Right cardiac atrium (tissue), 5 donors: ENCODE measurements at regions of chr2 and their contacts with region 1.

Region 1: DNA sequence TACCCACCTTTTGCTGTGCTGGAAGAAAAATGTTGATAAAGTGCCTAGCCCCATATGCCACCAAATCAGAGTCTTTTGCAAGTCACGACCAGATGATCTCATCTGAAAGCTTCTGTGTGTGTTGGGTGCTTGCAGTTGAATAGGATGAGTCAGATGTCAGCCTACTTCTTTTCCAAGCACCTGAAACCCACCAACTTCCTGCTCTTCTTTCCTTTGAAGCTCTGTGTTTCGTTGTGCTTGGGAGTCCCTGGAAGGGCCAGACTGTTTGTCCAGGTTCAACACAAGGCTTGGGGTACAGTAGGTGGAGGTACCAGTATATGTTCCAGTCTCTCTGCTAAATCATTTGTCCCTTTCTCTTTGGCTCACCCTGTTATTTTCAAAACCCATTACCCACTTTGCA is 36.8 kb upstream of the LCLAT1 start:
- DNase-seq: no peak
- ATAC-seq: no peak
- H3K4me3 ChIP-seq: no peak overlapping the region
- H3K27ac ChIP-seq: peak overlapping the region; percentile 21
- H3K4me1 ChIP-seq: peaks cover 19% of the 10 kb centered on the region
- H3K27me3 ChIP-seq: no peaks in the 10 kb centered on the region

Region 2: GRCh38 chr2:29174937-29175336 is 1235.3 kb before region 1 on chr2:
- intact Hi-C with region 1: no loop called
- DNase-seq: no peak
- ATAC-seq: no peak
- H3K4me3 ChIP-seq: no peak overlapping the region
- H3K27ac ChIP-seq: no peak overlapping the region
- H3K4me1 ChIP-seq: no peaks in the 10 kb centered on the region
- H3K27me3 ChIP-seq: no peaks in the 10 kb centered on the region

Region 3: GRCh38 chr2:30362468-30363081 is 47.6 kb before region 1 on chr2:
- intact Hi-C with region 1: loop called in 2 of 4 experiments (anchors 5 kb)
- DNase-seq: no peak
- ATAC-seq: no peak
- H3K4me3 ChIP-seq: no peak overlapping the region
- H3K27ac ChIP-seq: peak overlapping the region; percentile 37
- H3K4me1 ChIP-seq: peaks cover 19% of the 10 kb centered on the region
- H3K27me3 ChIP-seq: no peaks in the 10 kb centered on the region

Region 4: DNA sequence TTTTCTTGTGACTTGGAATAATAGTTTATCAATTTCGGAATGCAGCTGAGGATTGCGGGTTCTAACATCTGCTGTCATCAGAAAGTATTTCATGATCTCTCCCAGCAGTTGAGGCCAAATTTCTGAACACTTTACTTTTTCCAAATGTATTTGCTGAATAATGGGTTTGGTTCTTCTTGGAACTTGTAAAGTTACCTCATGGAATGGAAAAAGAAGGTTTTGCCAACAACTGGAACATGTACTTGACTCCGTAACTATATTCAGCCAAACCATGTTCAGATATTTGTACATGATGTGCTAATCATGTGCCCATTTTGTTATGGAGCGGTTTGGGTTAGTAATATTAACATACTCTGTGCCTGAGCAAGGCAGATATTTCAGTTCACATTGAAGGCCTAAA is 156.4 kb after region 1 on chr2:
- intact Hi-C with region 1: no loop called
- DNase-seq: no peak
- ATAC-seq: peak in 1 of 2 donors; percentile 79
- H3K4me3 ChIP-seq: no peak overlapping the region
- H3K27ac ChIP-seq: no peak overlapping the region
- H3K4me1 ChIP-seq: no peaks in the 10 kb centered on the region
- H3K27me3 ChIP-seq: no peaks in the 10 kb centered on the region